ENCODE measurements at regions of chr3 and their contacts with region 1.

Region 1: GRCh38 chr3:119498186-119498987 is at the start of gene TIMMDC1:
- DNase-seq: peak; percentile 95 to 98 (median 96)
- H3K4me3 ChIP-seq: peak within 1 kb of the TSS; percentile 73
- H3K27ac ChIP-seq: peak within 1 kb of the TSS; percentile 38 to 81
- H3K4me1 ChIP-seq: peaks cover 8% of the 10 kb centered on the region
- H3K27me3 ChIP-seq: no peaks in the 10 kb centered on the region
- CTCF ChIP-seq: no peak
- EP300 ChIP-seq: peak; percentile 15
- POLR2A ChIP-seq: peak; percentile 74
- total RNA-seq, gene TIMMDC1: 38.7 to 82.4 (median 71.3) TPM

Region 2: DNA sequence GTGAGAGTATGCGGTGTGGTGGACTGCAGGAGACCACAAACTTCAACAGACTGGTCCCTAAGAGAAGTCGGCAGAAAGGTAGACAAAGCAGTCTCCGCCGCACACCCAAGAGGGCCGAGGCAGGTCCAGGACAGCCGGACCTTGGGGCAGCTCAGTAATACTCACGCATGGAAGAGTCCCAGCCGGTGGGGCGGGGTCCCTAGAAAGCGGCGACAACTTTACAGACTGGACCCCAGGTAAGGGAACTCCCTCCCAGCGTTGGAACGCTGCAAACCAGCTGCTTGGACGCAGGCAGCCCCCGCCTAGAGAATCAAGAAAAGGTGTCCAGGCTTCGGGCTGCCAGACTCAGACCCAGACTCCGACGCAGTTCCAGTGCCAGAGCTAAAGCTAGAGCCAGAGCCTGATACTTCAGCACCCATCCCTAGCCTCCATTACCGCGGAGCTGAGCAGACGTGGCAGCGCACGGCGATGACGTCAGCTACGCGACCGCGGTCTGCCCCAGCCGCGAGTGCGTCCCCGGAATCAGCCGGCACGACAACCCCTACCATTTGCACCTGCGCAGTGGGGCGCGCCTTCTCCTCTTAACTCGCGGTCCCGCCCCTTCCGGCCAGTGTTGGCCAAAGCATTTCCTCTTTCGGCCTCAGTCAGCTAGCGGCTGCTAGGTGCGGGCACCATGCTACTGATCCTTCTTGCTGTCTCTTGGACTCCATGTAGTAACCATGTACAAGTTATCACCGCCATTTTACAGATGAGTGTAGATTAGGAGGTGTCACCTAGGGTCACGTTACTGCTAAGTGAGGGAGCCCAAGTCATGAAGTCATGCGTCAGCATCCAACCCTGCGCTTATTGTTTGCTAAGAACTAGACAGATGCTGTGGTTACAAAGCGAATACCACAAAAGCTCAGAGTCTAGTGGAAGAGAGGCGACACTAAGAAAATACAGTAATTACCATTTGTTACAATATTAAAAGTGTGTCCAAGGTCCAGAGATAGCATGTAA is 34.9 kb before region 1 on chr3 and contains the start of gene TMEM39A:
- intact Hi-C with region 1: loop called in 1 of 4 experiments (anchors 5 kb)
- DNase-seq: peak; percentile 100
- H3K4me3 ChIP-seq: peak within 1 kb of the TSS; percentile 99
- H3K27ac ChIP-seq: peak within 1 kb of the TSS; percentile 71 to 77
- H3K4me1 ChIP-seq: peaks cover 6% of the 10 kb centered on the region
- H3K27me3 ChIP-seq: no peaks in the 10 kb centered on the region
- CTCF ChIP-seq: peak in 1 of 3 donors; percentile 37
- EP300 ChIP-seq: no peak
- POLR2A ChIP-seq: peak; percentile 93
- total RNA-seq, gene TMEM39A: 22.3 to 58.1 (median 39.1) TPM

Region 3: GRCh38 chr3:119676771-119677640 is 178.6 kb after region 1 on chr3 and contains the start of gene COX17:
- intact Hi-C with region 1: loop called in 3 of 4 experiments (anchors 10 kb)
- DNase-seq: peak; percentile 91 to 95 (median 93)
- H3K4me3 ChIP-seq: peak within 1 kb of the TSS; percentile 85
- H3K27ac ChIP-seq: peak within 1 kb of the TSS in 1 of 2 donors; percentile 70
- H3K4me1 ChIP-seq: peaks cover 2% of the 10 kb centered on the region
- H3K27me3 ChIP-seq: no peaks in the 10 kb centered on the region
- CTCF ChIP-seq: peak in 1 of 3 donors; percentile 32
- EP300 ChIP-seq: no peak
- POLR2A ChIP-seq: peak; percentile 61
- total RNA-seq, gene COX17: 12.4 to 30.6 (median 24.0) TPM